Posterior vena cava (tissue), 2 donors: ENCODE measurements at regions of chr6 and their contacts with region 1.

Region 1: GRCh38 chr6:44045672-44046015 is 81.6 kb downstream of the MRPL14 start:
- DNase-seq: no peak

Region 2: DNA sequence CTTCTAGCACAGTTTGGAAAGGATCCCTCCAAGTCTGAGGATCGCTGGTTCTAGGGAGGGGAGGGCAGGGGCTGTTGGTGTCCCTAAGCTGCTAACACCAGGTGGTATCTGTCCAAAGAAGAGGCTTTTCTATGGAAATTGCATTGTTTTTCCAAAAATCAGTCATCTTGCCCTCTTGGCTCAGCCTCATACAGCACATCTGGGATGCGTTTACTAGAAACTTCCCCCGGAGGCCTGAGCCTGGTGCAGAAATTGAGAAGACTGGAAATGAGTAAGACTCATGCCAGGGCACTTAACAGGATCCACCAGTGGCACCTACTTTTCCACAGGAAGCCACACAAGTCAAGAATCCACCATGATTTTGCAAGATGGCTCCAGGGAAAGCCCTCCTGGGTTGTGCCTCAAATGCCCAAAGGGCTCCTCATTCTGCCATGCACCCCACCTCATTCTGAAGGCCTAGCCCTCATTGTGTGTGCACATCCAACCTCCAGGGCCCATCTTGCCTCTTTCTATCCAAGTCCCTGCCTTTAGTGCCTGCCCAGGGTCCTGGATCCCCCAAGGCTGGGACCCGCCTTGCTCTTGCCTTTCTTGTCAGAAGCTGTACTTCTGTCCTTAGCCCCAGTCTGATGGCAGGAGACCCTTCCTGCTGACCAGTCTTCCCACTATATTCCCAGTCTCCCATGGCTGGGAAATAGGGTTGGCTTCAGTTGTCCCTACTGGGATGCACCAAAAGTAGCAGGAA is 16.0 kb before region 1 on chr6:
- intact Hi-C with region 1: loop called in 1 of 2 experiments (anchors 1 kb)
- DNase-seq: no peak